AG04449 (cell line): ENCODE measurements at regions of chr5 and their contacts with region 1.

Region 1: GRCh38 chr5:135944967-135945560 is 9.7 kb downstream of the LECT2 start:
- DNase-seq: peak; percentile 56
- H3K4me3 ChIP-seq: no peak overlapping the region
- CTCF ChIP-seq: peak; percentile 64

Region 2: GRCh38 chr5:134851307-134851923 is 1093.6 kb before region 1 on chr5:
- CTCF ChIA-PET with region 1: no interaction called
- POLR2A ChIA-PET with region 1: no interaction called
- DNase-seq: no peak
- H3K4me3 ChIP-seq: no peak overlapping the region
- CTCF ChIP-seq: peak; percentile 53

Region 3: GRCh38 chr5:135319928-135320607 is 625.0 kb before region 1 on chr5:
- CTCF ChIA-PET with region 1: no interaction called
- POLR2A ChIA-PET with region 1: no interaction called
- DNase-seq: no peak
- H3K4me3 ChIP-seq: no peak overlapping the region
- CTCF ChIP-seq: peak; percentile 18

Region 4: GRCh38 chr5:135905144-135905543 is 39.9 kb before region 1 on chr5:
- CTCF ChIA-PET with region 1: no interaction called
- POLR2A ChIA-PET with region 1: no interaction called
- DNase-seq: no peak
- H3K4me3 ChIP-seq: no peak overlapping the region
- CTCF ChIP-seq: no peak

Region 5: DNA sequence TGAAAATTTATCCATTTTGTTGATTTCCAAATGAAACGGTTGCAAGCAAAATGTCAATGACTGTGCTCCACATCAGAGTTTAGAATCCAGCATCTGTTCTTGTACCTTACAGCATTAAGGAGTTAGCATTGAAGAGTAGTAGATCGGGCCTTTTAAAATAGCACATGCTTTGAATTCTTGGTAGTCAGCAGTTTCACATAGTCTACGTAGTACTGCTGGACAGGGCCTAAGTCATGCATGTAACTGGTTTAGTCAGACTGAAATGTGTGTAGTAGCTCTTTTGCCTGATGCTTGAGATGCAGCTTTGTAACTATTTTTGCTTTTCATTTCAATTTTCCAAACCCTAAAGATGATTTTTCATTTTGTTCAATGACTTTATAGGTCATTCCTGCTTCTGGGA is 10.1 kb before region 1 on chr5:
- CTCF ChIA-PET with region 1: interaction called, 14 read pairs
- POLR2A ChIA-PET with region 1: no interaction called
- DNase-seq: no peak
- H3K4me3 ChIP-seq: no peak overlapping the region
- CTCF ChIP-seq: no peak

Region 6: GRCh38 chr5:136028782-136029742 is 84.0 kb after region 1 on chr5 and contains the start of gene TGFBI:
- CTCF ChIA-PET with region 1: interaction called, 16 read pairs
- POLR2A ChIA-PET with region 1: no interaction called
- DNase-seq: no peak
- H3K4me3 ChIP-seq: peak within 1 kb of the TSS; percentile 82
- CTCF ChIP-seq: peak; percentile 26

Region 7: DNA sequence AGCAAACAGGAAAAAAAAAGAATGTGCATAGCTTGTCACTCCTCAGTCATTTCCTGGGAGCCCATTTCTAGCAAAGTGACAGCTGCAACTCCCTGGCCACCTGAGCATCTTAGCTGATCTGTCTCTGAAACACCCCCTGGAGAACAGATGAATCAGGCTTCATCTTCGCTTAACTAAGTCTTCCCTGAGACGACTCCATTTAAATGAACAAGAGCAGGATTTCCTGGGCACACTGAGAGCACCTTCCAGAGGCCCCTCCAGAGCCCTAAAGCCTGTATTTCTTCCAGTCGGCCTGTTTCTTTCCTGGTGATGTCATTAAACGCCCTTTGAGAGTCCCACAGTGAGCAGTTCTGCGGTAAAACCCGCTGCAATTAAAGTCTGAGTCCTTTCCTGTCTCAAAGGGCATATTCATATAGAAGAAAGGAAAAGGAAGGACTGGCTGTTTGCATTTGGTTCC is 97.6 kb after region 1 on chr5:
- CTCF ChIA-PET with region 1: interaction called, 23 read pairs
- POLR2A ChIA-PET with region 1: no interaction called
- DNase-seq: no peak
- H3K4me3 ChIP-seq: no peak overlapping the region
- CTCF ChIP-seq: no peak

Region 8: GRCh38 chr5:136053336-136054141 is 108.5 kb after region 1 on chr5:
- CTCF ChIA-PET with region 1: interaction called, 36 read pairs
- POLR2A ChIA-PET with region 1: no interaction called
- DNase-seq: peak; percentile 87
- H3K4me3 ChIP-seq: no peak overlapping the region
- CTCF ChIP-seq: no peak

Region 9: DNA sequence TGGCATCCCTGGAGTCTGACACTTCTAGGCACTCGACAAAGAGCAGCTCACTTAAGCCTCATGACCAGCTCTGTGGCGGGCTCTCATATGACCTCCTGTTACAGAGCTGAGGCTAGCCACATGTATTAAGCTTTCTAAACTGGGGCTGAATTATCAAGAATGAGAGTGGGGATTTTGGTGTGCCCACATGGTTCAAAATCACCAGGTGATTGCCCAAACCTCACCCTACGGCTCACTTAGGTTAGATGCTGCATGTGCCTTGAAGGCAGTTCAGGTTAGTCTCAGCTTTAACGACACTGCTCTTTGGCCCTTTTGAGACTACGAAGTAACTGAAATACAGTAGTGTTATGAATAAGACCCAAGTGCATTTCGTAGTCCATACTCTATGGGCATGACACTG is 287.3 kb after region 1 on chr5:
- CTCF ChIA-PET with region 1: no interaction called
- POLR2A ChIA-PET with region 1: no interaction called
- DNase-seq: no peak
- H3K4me3 ChIP-seq: no peak overlapping the region
- CTCF ChIP-seq: no peak